ENCODE measurements at regions of chr1 and their contacts with region 1.

Region 1: GRCh38 chr1:234478481-234479309 is at the start of gene TARBP1:
- DNase-seq: peak; percentile 75
- H3K4me3 ChIP-seq: peak within 1 kb of the TSS; percentile 46 to 78 (median 48)
- H3K27ac ChIP-seq: peak within 1 kb of the TSS; percentile 35
- H3K4me1 ChIP-seq: peaks cover 6% of the 10 kb centered on the region
- H3K27me3 ChIP-seq: peaks cover 18 to 21% of the 10 kb centered on the region in 2 experiments
- CTCF ChIP-seq: peak in 1 of 2 donors; percentile 27
- POLR2A ChIP-seq: peak; percentile 71
- total RNA-seq, gene TARBP1: 21.0 and 23.4 TPM in 2 replicates

Region 2: GRCh38 chr1:234373064-234373958 is 105.4 kb before region 1 on chr1 and contains the start of gene COA6:
- CTCF ChIA-PET with region 1: interaction called, 7 read pairs
- POLR2A ChIA-PET with region 1: no interaction called
- dilution Hi-C with region 1: no loop called
- intact Hi-C with region 1: loop called (anchors 1 kb)
- DNase-seq: peak; percentile 97
- H3K4me3 ChIP-seq: peak within 1 kb of the TSS; percentile 83 to 86 (median 85)
- H3K27ac ChIP-seq: peak within 1 kb of the TSS; percentile 86
- H3K4me1 ChIP-seq: peaks cover 16% of the 10 kb centered on the region
- H3K27me3 ChIP-seq: no peaks in the 10 kb centered on the region
- CTCF ChIP-seq: no peak
- POLR2A ChIP-seq: peak; percentile 89
- total RNA-seq, gene COA6: 34.2 and 42.7 TPM in 2 replicates

Measured in endothelial cell of umbilical vein (primary cell).